Activated T-helper 1 cell treated with anti-CD3 and anti-CD28 coated beads, Interleukin-12 subunit alpha, Interleukin-12 subunit beta, Interleukin-2, Interleukin-4 antibody, amounts not matched to agents 30 ng/mL and 10 ng/mL and 1 ng/mL, durations not matched to agents 14 hours and 24 hours and 36 hours (primary cell): ENCODE measurements at regions of chr7 and their contacts with region 1.

Region 1: GRCh38 chr7:6221340-6222319 is 50.8 kb downstream of the CYTH3 start:
- DNase-seq: peak; percentile 6
- H3K4me3 Mint-ChIP-seq: peak overlapping the region; percentile 6
- H3K27ac Mint-ChIP-seq: peak overlapping the region; percentile 72
- H3K4me1 Mint-ChIP-seq: peaks cover 14% of the 10 kb centered on the region
- H3K27me3 Mint-ChIP-seq: peaks cover 41% of the 10 kb centered on the region

Region 2: GRCh38 chr7:6250364-6250833 is 28.8 kb after region 1 on chr7:
- intact Hi-C with region 1: loop called (anchors 1 kb)
- DNase-seq: no peak
- H3K4me3 Mint-ChIP-seq: no peak overlapping the region
- H3K27ac Mint-ChIP-seq: no peak overlapping the region
- H3K4me1 Mint-ChIP-seq: peaks cover 8% of the 10 kb centered on the region
- H3K27me3 Mint-ChIP-seq: peaks cover 59% of the 10 kb centered on the region

Region 3: GRCh38 chr7:6256677-6257535 is 35.3 kb after region 1 on chr7:
- intact Hi-C with region 1: loop called (anchors 1 kb)
- DNase-seq: no peak
- H3K4me3 Mint-ChIP-seq: no peak overlapping the region
- H3K27ac Mint-ChIP-seq: no peak overlapping the region
- H3K4me1 Mint-ChIP-seq: peaks cover 22% of the 10 kb centered on the region
- H3K27me3 Mint-ChIP-seq: peaks cover 56% of the 10 kb centered on the region